HCT116 (cell line): ENCODE measurements at regions of chr10 and their contacts with region 1.

Region 1: DNA sequence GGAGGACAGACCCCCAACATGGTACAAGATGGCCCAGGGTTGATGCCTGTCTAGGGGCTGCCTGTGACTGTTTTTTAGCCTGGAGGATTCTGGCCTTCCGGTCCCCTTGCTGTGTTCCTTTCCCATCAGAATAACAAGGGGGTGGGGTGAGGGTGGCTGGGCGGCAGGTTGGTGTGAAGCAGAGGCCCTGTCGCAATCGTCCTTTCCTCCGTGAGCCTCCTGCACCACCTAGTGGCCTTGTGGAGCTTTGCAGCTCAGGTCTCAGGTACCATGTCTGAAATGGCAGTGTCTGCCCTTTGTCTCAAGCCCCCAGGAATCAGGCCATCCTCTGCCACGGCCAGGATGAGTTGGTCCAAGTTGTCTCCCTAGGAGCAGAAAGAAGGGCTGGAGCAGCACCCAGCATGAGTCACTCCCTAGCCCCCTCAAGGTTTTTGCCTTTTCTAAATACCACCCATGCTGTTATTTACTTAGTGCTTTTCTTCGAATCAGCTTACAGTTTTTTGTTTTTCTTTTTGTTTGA is 24.2 kb downstream of the TACR2 start:
- DNase-seq: peak; percentile 65
- ATAC-seq: peak; percentile 97
- H3K4me3 ChIP-seq: no peak overlapping the region
- H3K27ac ChIP-seq: no peak overlapping the region
- H3K4me1 ChIP-seq: peaks cover 0 to 7% of the 10 kb centered on the region in 2 experiments; a peak in 1 of 4 replicates
- H3K27me3 ChIP-seq: no peaks in the 10 kb centered on the region
- CTCF ChIP-seq: peak; percentile 84 to 98 (median 95)
- POLR2A ChIP-seq: no peak
- RAD21 ChIP-seq: peak; percentile 99

Region 2: GRCh38 chr10:69004821-69005220 is 387.7 kb before region 1 on chr10:
- CTCF ChIA-PET with region 1: interaction called, 11 read pairs
- POLR2A ChIA-PET with region 1: no interaction called
- RAD21 ChIA-PET with region 1: interaction called in 1 of 2 experiments, 3 read pairs
- intact Hi-C with region 1: loop called (anchors 5 kb)
- DNase-seq: peak; percentile 18
- ATAC-seq: no peak
- H3K4me3 ChIP-seq: no peak overlapping the region
- H3K27ac ChIP-seq: no peak overlapping the region
- H3K4me1 ChIP-seq: no peaks in the 10 kb centered on the region
- H3K27me3 ChIP-seq: no peaks in the 10 kb centered on the region
- CTCF ChIP-seq: peak; percentile 27 to 65 (median 41); a peak in 4 of 6 replicates
- POLR2A ChIP-seq: no peak
- RAD21 ChIP-seq: peak; percentile 71

Region 3: DNA sequence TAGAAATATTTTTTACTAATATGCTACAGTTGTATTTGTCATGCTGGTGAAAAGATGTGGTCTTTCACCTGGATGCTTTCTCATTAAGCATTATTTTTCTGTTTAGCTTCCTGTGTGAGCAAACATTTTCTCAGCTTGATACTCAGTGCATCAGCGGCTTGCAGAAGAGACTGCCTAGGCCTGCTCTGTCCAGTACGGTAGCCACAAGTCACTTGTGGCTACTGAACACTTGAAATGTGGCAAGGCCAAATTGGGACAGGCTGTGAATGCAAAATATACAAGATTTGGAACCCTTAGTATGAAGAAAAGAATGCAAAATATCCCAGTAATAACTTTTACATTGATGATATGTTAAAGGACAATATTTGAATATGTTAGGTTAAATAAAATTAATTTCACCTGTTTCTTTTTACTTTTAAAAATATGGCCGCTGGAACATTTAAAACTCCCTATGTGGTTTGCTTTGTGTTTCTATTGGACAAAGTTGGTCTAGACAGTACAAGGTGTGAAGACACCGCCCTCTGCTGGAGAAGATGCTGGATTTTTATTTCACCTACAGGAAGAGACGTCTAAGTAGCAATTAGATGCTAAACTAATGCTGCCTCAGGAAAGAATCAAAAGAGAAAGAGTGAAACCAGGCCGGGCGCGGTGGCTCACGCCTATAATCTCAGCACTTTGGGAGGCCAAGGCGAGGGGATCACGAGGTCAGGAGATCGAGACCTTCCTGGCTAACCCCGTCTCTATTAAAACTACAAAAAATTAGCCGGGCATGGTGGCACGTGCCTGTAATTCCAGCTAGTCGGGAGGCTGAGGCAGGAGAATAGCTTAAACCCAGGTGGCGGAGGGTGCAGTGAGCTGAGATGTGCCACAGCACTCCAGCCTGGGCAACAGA is 299.3 kb before region 1 on chr10:
- CTCF ChIA-PET with region 1: interaction called, 9 read pairs
- POLR2A ChIA-PET with region 1: no interaction called
- RAD21 ChIA-PET with region 1: interaction called in 1 of 2 experiments, 3 read pairs
- intact Hi-C with region 1: loop called (anchors 1 kb)
- DNase-seq: peak; percentile 89
- ATAC-seq: peak; percentile 97
- H3K4me3 ChIP-seq: no peak overlapping the region
- H3K27ac ChIP-seq: no peak overlapping the region
- H3K4me1 ChIP-seq: peaks cover 0 to 2% of the 10 kb centered on the region in 2 experiments; a peak in 2 of 4 replicates
- H3K27me3 ChIP-seq: no peaks in the 10 kb centered on the region
- CTCF ChIP-seq: peak; percentile 57 to 87 (median 81)
- POLR2A ChIP-seq: no peak
- RAD21 ChIP-seq: peak; percentile 88

Region 4: DNA sequence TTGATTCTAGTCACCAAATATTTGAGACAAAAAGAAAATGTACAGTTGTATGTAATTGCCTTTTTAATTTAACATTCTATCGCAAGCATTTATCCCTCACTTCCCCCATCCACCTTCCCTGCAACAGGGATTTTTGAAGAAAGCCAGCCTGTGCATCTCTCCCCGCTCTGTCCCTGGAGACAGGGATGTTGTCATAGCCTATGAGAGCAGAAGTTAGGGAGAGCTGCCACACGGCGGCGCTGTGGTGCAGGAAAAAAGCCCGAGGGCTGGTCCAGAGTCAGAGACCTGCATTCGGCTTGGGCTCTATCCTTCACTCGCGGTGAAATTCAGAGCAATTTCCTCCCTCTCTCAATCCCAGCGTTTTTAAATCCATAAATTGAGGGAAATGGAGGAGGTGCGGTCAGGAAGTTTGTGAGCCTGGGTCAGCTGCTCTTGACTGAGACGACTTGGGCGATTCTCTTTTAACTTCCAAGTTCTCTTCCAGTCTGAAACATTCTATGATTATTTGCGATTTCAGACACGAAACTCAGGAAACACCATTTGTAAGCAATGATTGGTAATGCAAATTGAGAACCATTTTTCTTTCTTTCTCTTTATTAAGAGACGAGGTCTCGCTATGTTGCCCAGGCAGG is 154.9 kb before region 1 on chr10:
- CTCF ChIA-PET with region 1: interaction called, 11 read pairs
- POLR2A ChIA-PET with region 1: no interaction called
- RAD21 ChIA-PET with region 1: no interaction called
- intact Hi-C with region 1: loop called (anchors 1 kb)
- DNase-seq: peak; percentile 59
- ATAC-seq: peak; percentile 99
- H3K4me3 ChIP-seq: no peak overlapping the region
- H3K27ac ChIP-seq: no peak overlapping the region
- H3K4me1 ChIP-seq: peaks cover 4 to 16% of the 10 kb centered on the region in 2 experiments
- H3K27me3 ChIP-seq: no peaks in the 10 kb centered on the region
- CTCF ChIP-seq: peak; percentile 89 to 93 (median 90)
- POLR2A ChIP-seq: no peak
- RAD21 ChIP-seq: peak; percentile 98